ENCODE measurements at regions of chr11 and their contacts with region 1.

Region 1: DNA sequence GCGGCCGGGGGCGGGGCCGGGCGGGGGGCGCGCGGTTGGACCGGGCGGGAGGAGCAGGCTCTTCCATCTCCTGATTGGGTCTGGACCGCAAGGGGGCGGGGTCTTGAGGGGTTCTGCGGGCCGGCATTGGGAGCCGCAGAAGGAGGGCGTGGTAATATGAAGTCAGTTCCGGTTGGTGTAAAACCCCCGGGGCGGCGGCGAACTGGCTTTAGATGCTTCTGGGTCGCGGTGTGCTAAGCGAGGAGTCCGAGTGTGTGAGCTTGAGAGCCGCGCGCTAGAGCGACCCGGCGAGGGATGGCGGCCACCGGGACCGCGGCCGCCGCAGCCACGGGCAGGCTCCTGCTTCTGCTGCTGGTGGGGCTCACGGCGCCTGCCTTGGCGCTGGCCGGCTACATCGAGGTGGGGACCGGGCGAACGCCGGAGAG is at the start of gene APLP2:
- DNase-seq: peak; percentile 98
- H3K4me3 Mint-ChIP-seq: peak within 1 kb of the TSS; percentile 91
- H3K27ac Mint-ChIP-seq: peak within 1 kb of the TSS; percentile 86
- H3K4me1 Mint-ChIP-seq: peaks cover 23% of the 10 kb centered on the region
- H3K27me3 Mint-ChIP-seq: peaks cover 4% of the 10 kb centered on the region
- total RNA-seq, gene APLP2: 38.4 to 43.5 TPM

Region 2: GRCh38 chr11:129815596-129816461 is 253.9 kb before region 1 on chr11 and contains the start of gene TMEM45B:
- CTCF ChIA-PET with region 1: no interaction called
- intact Hi-C with region 1: loop called (anchors 1 kb)
- DNase-seq: peak; percentile 39
- H3K4me3 Mint-ChIP-seq: peak within 1 kb of the TSS; percentile 79
- H3K27ac Mint-ChIP-seq: peak within 1 kb of the TSS; percentile 78
- H3K4me1 Mint-ChIP-seq: peaks cover 52% of the 10 kb centered on the region
- H3K27me3 Mint-ChIP-seq: peaks cover 2% of the 10 kb centered on the region
- total RNA-seq, gene TMEM45B: 3.8 to 3.9 TPM

Region 3: GRCh38 chr11:129895126-129896041 is 174.3 kb before region 1 on chr11 and contains the start of gene NFRKB:
- CTCF ChIA-PET with region 1: no interaction called
- intact Hi-C with region 1: loop called (anchors 1 kb)
- DNase-seq: peak; percentile 83
- H3K4me3 Mint-ChIP-seq: peak within 1 kb of the TSS; percentile 87
- H3K27ac Mint-ChIP-seq: peak within 1 kb of the TSS; percentile 79
- H3K4me1 Mint-ChIP-seq: peaks cover 27% of the 10 kb centered on the region
- H3K27me3 Mint-ChIP-seq: no peaks in the 10 kb centered on the region
- total RNA-seq, gene NFRKB: 34.0 to 36.4 TPM

Region 4: GRCh38 chr11:129922674-129923073 is 147.0 kb before region 1 on chr11:
- CTCF ChIA-PET with region 1: interaction called, 4 read pairs
- intact Hi-C with region 1: loop called (anchors 1 kb)
- DNase-seq: no peak
- H3K4me3 Mint-ChIP-seq: no peak overlapping the region
- H3K27ac Mint-ChIP-seq: no peak overlapping the region
- H3K4me1 Mint-ChIP-seq: peaks cover 8% of the 10 kb centered on the region
- H3K27me3 Mint-ChIP-seq: no peaks in the 10 kb centered on the region

Region 5: GRCh38 chr11:130118636-130119387 is 49.1 kb after region 1 on chr11:
- CTCF ChIA-PET with region 1: interaction called, 3 read pairs
- intact Hi-C with region 1: loop called (anchors 1 kb)
- DNase-seq: peak; percentile 35
- H3K4me3 Mint-ChIP-seq: no peak overlapping the region
- H3K27ac Mint-ChIP-seq: no peak overlapping the region
- H3K4me1 Mint-ChIP-seq: peaks cover 46% of the 10 kb centered on the region
- H3K27me3 Mint-ChIP-seq: peaks cover 7% of the 10 kb centered on the region

Measured in activated naive CD4-positive, alpha-beta T cell treated with anti-CD3 and anti-CD28 coated beads for 36 hours (primary cell).